ENCODE measurements at regions of chr11 and their contacts with region 1.

Region 1: GRCh38 chr11:777288-778255 is at the start of gene GATD1:
- DNase-seq: peak; percentile 99

Region 2: DNA sequence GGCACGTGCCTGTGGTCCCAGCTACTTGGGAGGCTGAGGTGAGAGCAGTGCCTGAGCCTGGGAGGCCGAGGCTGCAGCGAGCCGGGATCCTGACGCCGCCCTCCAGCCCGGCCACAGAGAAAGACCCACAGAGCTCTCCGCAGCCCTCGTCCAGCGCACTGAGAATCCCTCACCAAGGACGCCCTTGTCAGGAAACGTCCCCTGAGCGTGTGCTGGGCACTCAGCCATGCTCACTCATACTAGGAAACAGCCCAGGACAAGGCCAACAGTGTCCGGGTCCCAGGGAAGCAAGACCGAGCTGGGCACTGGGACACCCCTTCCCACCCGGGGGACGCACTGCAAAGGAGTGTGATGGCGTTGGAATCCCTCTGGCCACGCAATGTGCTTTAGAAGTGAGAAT is 97.1 kb before region 1 on chr11:
- CTCF ChIA-PET with region 1: no interaction called
- POLR2A ChIA-PET with region 1: no interaction called
- DNase-seq: no peak

Region 3: GRCh38 chr11:798093-798713 is 20.6 kb after region 1 on chr11 and contains the start of gene SLC25A22:
- CTCF ChIA-PET with region 1: interaction called, 4 read pairs
- POLR2A ChIA-PET with region 1: interaction called, 20 read pairs
- DNase-seq: peak; percentile 91

Region 4: DNA sequence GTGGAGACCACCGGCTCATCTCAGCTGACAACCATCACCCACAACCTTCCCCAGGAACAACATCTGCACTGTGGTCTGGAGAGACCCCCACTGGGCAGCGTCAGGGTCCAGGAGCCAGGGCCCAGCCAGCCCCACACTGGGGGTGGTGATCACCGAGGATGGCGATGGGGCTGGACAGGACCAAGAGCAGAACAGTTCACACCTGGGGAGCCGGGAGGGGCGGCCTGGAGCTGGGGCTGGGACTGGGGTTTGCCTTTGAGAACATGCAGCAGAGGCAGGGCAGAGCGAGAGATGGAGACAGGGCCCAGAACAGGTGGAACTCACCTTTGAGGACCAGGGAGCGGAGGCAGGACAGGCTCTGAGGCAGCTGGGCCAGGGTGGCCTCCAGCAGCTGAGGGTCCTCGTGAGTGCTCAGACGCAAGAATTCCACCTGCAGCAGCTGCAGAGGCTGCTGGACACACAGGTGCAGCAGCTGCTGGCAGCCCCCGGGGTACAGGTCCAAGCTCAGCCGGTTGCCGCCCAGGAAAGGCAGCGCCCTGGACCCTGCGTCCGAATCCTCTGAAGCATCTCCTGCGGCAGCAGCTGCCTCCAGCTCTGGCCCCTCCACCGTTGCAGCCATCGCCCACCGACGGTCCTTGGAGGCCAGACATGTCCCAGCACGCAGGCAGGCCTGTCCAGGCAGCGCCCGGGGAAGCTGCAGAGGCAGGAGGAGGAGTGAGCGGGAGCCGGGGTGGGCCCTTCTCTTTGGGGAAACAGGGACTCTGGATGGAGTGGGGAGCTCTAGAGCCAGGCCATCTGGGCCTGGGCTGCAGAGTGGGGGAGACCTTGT is 26.4 kb after region 1 on chr11:
- CTCF ChIA-PET with region 1: no interaction called
- POLR2A ChIA-PET with region 1: interaction called, 14 read pairs
- DNase-seq: no peak

Region 5: DNA sequence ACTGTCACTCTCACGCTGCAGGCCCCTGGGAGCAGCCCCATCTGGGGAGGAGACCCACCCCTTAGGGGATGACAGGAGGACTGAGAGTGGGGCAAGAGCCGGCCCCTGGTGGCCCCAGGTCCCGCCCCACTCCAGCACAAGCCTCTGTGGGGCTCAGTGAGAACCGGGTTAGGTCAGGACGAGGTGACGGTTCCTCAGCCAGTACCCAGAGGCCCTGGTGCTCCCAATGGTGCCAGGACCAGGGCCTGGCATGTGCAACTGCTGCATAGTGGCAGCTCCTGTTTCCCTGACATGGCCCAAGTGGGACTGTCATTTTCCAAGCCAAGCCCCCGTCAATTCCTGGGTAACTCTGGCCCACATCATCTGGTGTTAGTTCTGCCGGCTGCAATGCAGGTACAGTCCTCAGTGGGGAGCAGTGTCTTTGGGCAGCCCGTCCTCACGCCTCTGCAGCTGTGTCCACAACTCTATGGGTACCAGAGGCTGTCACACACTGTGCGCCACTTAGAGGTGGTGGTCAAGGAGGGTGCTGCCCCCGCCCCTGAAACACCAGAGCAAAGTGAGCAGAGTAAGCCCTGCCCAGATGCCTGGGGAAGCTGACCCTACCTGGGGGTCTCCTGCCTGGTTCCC is 117.1 kb after region 1 on chr11:
- CTCF ChIA-PET with region 1: no interaction called
- POLR2A ChIA-PET with region 1: no interaction called
- DNase-seq: no peak